ENCODE measurements at regions of chr11 and their contacts with region 1.

Region 1: DNA sequence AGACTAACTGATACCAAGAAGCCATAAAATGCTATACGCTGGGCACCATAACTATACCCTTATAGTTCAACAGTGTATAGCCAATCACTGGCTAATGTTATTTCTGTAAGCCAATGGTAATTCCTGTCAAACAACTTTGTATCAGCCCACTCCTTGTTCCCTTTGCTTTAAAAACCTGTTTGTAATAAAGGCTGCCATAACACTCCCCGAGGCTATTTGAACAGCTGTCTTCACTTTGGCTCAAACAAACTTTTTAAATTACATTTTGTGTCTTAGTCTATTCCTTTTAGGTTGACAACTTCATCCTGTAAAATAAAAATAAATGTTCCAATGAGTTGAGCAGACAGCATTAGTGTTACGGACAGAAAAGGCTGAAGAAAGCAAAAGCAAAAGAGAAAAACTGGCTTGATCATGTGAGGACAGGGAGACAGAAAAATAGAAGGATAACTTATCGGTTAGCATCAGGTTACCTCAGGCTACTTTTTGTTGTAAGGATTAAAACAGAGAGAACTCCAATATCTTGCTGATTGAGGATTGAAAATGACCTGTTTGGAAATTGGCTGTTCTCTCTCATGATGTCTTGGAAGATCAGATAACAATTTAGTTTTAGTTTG is 95.0 kb downstream of the AASDHPPT start:
- DNase-seq: no peak
- H3K4me3 ChIP-seq: no peak overlapping the region
- H3K27ac ChIP-seq: no peak overlapping the region
- H3K4me1 ChIP-seq: peaks cover 0 to 3% (median 1%) of the 10 kb centered on the region in 4 experiments; a peak in 2 of 7 replicates
- H3K27me3 ChIP-seq: no peaks in the 10 kb centered on the region
- CTCF ChIP-seq: no peak
- EP300 ChIP-seq: no peak
- POLR2A ChIP-seq: no peak
- RAD21 ChIP-seq: no peak

Region 2: GRCh38 chr11:106156290-106156937 is 16.1 kb before region 1 on chr11:
- CTCF ChIA-PET with region 1: interaction called, 12 read pairs
- POLR2A ChIA-PET with region 1: no interaction called
- DNase-seq: no peak
- H3K4me3 ChIP-seq: no peak overlapping the region
- H3K27ac ChIP-seq: no peak overlapping the region
- H3K4me1 ChIP-seq: no peaks in the 10 kb centered on the region
- H3K27me3 ChIP-seq: peaks cover 0 to 2% (median 0%) of the 10 kb centered on the region in 4 experiments; a peak in 1 of 7 replicates
- CTCF ChIP-seq: peak in 2 of 3 experiments; percentile 48 to 49; a peak in 3 of 4 replicates
- EP300 ChIP-seq: no peak
- POLR2A ChIP-seq: no peak
- RAD21 ChIP-seq: peak; percentile 66 to 71

Measured in H1 (cell line).